ENCODE measurements at regions of chr7 and their contacts with region 1.

Region 1: GRCh38 chr7:96321658-96322372 is at the start of gene SLC25A13:
- DNase-seq: peak; percentile 73
- ATAC-seq: peak; percentile 69
- H3K4me3 Mint-ChIP-seq: peak within 1 kb of the TSS; percentile 81
- H3K27ac Mint-ChIP-seq: peak within 1 kb of the TSS; percentile 96
- H3K4me1 Mint-ChIP-seq: peaks cover 36% of the 10 kb centered on the region
- H3K27me3 Mint-ChIP-seq: peaks cover 2% of the 10 kb centered on the region
- CTCF ChIP-seq: no peak
- total RNA-seq, gene SLC25A13: 7.3 to 9.0 TPM

Region 2: DNA sequence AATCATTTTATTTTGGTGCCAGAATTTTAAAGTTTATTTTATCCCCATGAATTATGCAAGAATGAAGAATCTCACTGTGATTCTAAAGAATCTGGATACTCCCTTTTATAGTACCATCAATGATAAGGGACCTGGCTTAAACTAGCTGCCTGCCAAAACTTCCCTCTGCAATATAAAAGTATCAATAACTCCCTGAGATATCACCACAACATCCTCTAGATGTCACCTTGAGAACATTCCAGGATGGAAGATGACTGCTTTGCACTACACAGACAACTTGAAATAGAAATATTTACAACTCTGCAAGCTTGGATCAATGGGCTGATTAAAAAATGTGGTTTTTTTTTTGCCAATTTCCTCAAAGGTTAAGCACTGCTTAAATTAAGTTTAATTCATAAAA is 142.0 kb before region 1 on chr7:
- CTCF ChIA-PET with region 1: no interaction called
- POLR2A ChIA-PET with region 1: no interaction called
- intact Hi-C with region 1: no loop called
- DNase-seq: no peak
- ATAC-seq: no peak
- H3K4me3 Mint-ChIP-seq: no peak overlapping the region
- H3K27ac Mint-ChIP-seq: no peak overlapping the region
- H3K4me1 Mint-ChIP-seq: no peaks in the 10 kb centered on the region
- H3K27me3 Mint-ChIP-seq: no peaks in the 10 kb centered on the region
- CTCF ChIP-seq: no peak

Region 3: GRCh38 chr7:96285579-96285978 is 36.2 kb before region 1 on chr7:
- CTCF ChIA-PET with region 1: no interaction called
- POLR2A ChIA-PET with region 1: no interaction called
- intact Hi-C with region 1: loop called (anchors 2 kb)
- DNase-seq: peak; percentile 61
- ATAC-seq: peak; percentile 80
- H3K4me3 Mint-ChIP-seq: no peak overlapping the region
- H3K27ac Mint-ChIP-seq: peak overlapping the region; percentile 80
- H3K4me1 Mint-ChIP-seq: peaks cover 37% of the 10 kb centered on the region
- H3K27me3 Mint-ChIP-seq: no peaks in the 10 kb centered on the region
- CTCF ChIP-seq: no peak

Region 4: DNA sequence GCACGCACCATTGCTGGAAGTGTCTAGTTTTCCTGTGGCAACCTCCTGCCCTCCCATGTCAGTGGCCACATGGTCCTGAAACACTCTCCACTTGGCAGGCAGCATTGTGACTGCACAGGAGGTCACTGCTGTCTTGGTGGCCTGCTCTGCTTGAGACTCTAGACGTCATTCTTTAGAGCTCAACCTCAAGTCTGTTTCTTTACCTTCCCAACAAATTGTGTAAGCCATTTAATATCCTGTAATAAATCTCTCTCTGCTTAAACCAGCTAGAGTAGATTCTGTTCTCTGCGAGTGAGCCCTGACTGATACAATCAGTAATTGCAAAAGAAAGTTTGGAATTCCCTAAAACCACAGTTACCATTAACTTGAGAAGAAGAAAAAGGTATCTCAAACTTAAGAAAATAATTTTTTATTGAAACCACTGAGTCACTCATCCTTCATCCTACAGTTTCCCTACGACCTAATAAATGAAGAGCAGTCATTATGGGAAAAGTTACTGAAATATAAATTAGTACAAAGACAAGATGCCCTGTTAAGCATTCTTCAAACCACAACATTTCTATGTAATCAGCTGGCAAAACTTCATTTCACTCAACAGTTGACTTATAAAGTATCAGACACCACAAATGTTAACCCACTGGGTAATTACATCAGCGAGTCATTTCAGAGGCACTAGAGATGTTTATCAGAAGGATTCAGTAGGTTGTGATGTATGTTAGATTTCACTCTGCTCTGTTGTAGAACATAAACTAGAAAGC is 17.9 kb before region 1 on chr7:
- CTCF ChIA-PET with region 1: no interaction called
- POLR2A ChIA-PET with region 1: interaction called, 5 read pairs
- intact Hi-C with region 1: loop called (anchors 2 kb)
- DNase-seq: no peak
- ATAC-seq: peak; percentile 90
- H3K4me3 Mint-ChIP-seq: peak overlapping the region; percentile 15
- H3K27ac Mint-ChIP-seq: peak overlapping the region; percentile 80
- H3K4me1 Mint-ChIP-seq: peaks cover 50% of the 10 kb centered on the region
- H3K27me3 Mint-ChIP-seq: no peaks in the 10 kb centered on the region
- CTCF ChIP-seq: no peak

Region 5: GRCh38 chr7:96359876-96360275 is 38.1 kb after region 1 on chr7:
- CTCF ChIA-PET with region 1: no interaction called
- POLR2A ChIA-PET with region 1: no interaction called
- intact Hi-C with region 1: no loop called
- DNase-seq: no peak
- ATAC-seq: no peak
- H3K4me3 Mint-ChIP-seq: no peak overlapping the region
- H3K27ac Mint-ChIP-seq: no peak overlapping the region
- H3K4me1 Mint-ChIP-seq: no peaks in the 10 kb centered on the region
- H3K27me3 Mint-ChIP-seq: no peaks in the 10 kb centered on the region
- CTCF ChIP-seq: no peak

Region 6: GRCh38 chr7:96837593-96837992 is 515.8 kb after region 1 on chr7:
- CTCF ChIA-PET with region 1: no interaction called
- POLR2A ChIA-PET with region 1: no interaction called
- intact Hi-C with region 1: loop called (anchors 10 kb)
- DNase-seq: peak; percentile 62
- ATAC-seq: peak; percentile 96
- H3K4me3 Mint-ChIP-seq: peak overlapping the region; percentile 4
- H3K27ac Mint-ChIP-seq: no peak overlapping the region
- H3K4me1 Mint-ChIP-seq: peaks cover 31% of the 10 kb centered on the region
- H3K27me3 Mint-ChIP-seq: peaks cover 47% of the 10 kb centered on the region
- CTCF ChIP-seq: no peak